ENCODE measurements at regions of chrX and their contacts with region 1.

Region 1: DNA sequence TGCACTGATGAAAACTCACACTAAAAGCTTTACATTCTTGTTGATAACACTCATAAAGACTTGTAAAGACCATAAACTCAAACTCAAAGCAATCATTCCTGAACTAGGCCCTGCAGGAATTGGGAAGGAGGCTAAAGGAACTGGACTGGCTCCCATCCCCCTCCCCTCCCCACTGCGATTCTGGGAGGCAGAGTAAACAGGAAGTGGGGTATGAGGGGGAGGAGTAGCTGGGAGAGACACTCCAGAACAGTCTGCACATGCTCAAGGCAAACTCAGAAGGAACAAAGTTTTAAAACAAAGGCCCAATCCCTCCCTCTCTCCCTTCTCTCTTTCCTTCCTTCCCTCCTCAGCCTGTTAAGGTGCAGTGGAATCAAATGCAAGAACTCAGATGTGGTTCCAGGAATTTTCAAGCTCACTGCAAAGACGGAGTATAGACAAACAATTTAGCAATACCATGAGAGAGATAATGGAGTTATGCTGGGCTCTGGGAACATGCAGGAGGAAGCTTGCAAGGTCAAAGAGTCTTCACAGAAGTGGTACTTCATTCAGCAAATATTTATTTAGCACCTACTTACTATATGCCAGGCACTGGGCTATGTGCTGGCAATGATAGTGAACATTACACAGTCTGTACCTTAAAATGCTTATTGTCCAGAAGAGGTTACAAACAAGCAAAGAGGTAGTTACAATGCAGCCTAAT is 15.9 kb downstream of the MID1IP1 start:
- DNase-seq: no peak
- H3K4me3 ChIP-seq: no peak overlapping the region
- H3K4me3 Mint-ChIP-seq: peak overlapping the region in 5 of 8 donors; percentile 23 to 79 (median 49)
- H3K27ac ChIP-seq: peak overlapping the region; percentile 49
- H3K27ac Mint-ChIP-seq: peak overlapping the region in 1 of 7 donors; percentile 88
- H3K4me1 ChIP-seq: peaks cover 68% of the 10 kb centered on the region
- H3K4me1 Mint-ChIP-seq: peaks cover 9 to 20% (median 14%) of the 10 kb centered on the region in 4 donors
- H3K27me3 ChIP-seq: no peaks in the 10 kb centered on the region
- H3K27me3 Mint-ChIP-seq: no peaks in the 10 kb centered on the region

Region 2: DNA sequence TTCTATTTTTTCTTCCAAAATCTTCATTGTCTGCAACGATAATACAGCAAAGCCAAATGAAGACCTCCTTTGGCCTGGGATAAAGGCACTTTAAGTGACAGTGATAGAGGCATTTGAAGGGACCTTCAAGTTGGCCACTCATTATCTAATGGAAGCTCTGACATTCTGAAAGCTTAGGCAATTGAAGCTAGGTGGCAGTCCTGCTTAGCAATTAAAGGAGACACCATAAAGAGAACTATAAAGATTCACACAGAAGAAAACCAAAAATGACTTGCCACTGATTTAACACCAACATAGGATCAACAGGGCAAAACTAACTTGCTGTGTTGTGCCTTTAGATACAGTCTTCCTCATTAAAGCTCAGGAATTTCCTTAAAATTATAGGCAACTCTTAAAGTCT is 359.1 kb before region 1 on chrX:
- CTCF ChIA-PET with region 1: no interaction called
- POLR2A ChIA-PET with region 1: no interaction called
- intact Hi-C with region 1: no loop called
- DNase-seq: no peak
- H3K4me3 ChIP-seq: no peak overlapping the region
- H3K4me3 Mint-ChIP-seq: no peak overlapping the region
- H3K27ac ChIP-seq: no peak overlapping the region
- H3K27ac Mint-ChIP-seq: no peak overlapping the region
- H3K4me1 ChIP-seq: no peaks in the 10 kb centered on the region
- H3K4me1 Mint-ChIP-seq: no peaks in the 10 kb centered on the region
- H3K27me3 ChIP-seq: no peaks in the 10 kb centered on the region
- H3K27me3 Mint-ChIP-seq: no peaks in the 10 kb centered on the region

Region 3: GRCh38 chrX:38552721-38553120 is 264.4 kb before region 1 on chrX:
- CTCF ChIA-PET with region 1: no interaction called
- POLR2A ChIA-PET with region 1: no interaction called
- intact Hi-C with region 1: no loop called
- DNase-seq: no peak
- H3K4me3 ChIP-seq: no peak overlapping the region
- H3K4me3 Mint-ChIP-seq: no peak overlapping the region
- H3K27ac ChIP-seq: no peak overlapping the region
- H3K27ac Mint-ChIP-seq: no peak overlapping the region
- H3K4me1 ChIP-seq: no peaks in the 10 kb centered on the region
- H3K4me1 Mint-ChIP-seq: no peaks in the 10 kb centered on the region
- H3K27me3 ChIP-seq: no peaks in the 10 kb centered on the region
- H3K27me3 Mint-ChIP-seq: peaks cover 0 to 3% of the 10 kb centered on the region in 2 donors

Region 4: GRCh38 chrX:38879631-38880220 is 62.6 kb after region 1 on chrX:
- CTCF ChIA-PET with region 1: no interaction called
- POLR2A ChIA-PET with region 1: interaction called, 11 read pairs
- intact Hi-C with region 1: no loop called
- DNase-seq: peak; percentile 6 to 35 (median 8)
- H3K4me3 ChIP-seq: no peak overlapping the region
- H3K4me3 Mint-ChIP-seq: peak overlapping the region in 6 of 8 donors; percentile 17 to 54 (median 45)
- H3K27ac ChIP-seq: no peak overlapping the region
- H3K27ac Mint-ChIP-seq: peak overlapping the region in 4 of 7 donors; percentile 11 to 64 (median 22)
- H3K4me1 ChIP-seq: peaks cover 18% of the 10 kb centered on the region
- H3K4me1 Mint-ChIP-seq: peaks cover 12 to 22% (median 16%) of the 10 kb centered on the region in 4 donors
- H3K27me3 ChIP-seq: no peaks in the 10 kb centered on the region
- H3K27me3 Mint-ChIP-seq: no peaks in the 10 kb centered on the region

Measured in CD4-positive, alpha-beta memory T cell (primary cell).